AG04450 (cell line): ENCODE measurements at regions of chr4 and their contacts with region 1.

Region 1: DNA sequence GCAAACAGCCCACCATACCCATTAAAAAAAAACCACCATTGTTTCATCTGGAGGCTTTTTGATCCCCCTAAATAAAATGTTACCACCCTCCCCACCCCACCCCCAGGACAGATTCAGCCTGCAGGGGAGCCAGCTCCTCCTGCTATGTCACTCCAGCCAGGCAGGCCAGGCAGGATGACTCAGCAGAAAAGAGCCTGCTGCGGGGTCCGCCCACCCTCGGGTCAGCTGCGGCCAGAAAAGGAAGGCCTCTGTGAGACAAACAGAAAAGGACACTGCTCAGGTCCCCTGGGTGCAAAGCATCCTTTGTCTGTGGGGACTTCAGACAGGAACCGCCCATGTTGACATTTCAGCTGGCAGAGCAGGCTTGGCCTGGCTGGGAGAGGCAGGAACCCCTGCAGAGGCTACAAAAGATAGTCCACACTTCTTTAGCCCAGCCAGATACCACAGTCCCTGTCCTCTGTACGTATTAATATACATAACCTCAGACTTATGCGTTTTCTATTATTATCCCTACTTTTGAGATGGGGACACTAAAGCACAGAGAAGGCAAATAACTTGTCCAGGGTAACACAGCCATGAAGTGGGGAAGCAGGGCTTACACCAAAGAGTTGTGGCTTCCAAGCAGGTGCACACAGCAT is 147.7 kb downstream of the CPEB2 start:
- DNase-seq: peak; percentile 46
- H3K4me3 ChIP-seq: no peak overlapping the region
- H3K27ac ChIP-seq: peak overlapping the region; percentile 65
- H3K27me3 ChIP-seq: no peaks in the 10 kb centered on the region
- CTCF ChIP-seq: no peak; the same call in 1 of the 2 replicates

Region 2: DNA sequence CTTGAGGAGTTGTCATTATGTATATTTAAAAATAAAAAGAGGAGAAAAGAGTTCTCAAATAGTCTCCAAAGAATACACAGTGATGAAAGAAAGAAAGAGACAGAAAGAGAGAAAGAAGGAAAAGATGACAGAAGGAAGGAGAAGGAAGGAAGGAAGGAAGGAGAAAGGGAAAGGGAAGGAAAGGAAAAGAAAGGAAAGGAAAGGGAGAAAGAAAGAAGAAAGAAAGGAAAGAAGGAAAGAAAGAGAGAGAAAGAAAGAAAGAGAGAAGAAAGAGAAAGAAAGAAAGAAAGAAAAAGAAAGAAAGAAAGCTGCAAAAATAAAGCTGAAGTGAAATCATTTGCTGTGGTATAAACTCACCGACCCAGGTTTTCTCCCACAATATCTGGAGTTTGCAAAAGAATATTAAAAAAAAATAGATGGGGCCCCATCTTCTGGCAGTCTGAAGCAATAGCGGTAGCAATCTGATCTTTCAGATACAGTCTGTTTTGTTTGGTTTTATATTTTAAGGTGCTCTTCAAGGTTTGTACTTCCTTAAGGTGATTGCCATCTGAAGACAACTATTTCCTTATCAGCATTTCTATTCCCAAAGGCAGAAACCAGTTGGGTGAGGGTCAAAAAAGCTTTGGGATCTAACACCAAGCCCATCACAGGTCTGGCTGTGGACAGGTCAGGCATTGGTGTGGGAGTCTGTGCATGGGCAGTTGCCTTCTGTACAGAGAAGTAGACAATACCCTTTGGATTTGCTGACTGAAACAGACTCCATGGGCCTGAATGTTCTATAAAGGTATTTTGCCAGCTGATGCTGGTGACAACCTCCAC is 12.7 kb after region 1 on chr4:
- CTCF ChIA-PET with region 1: interaction called, 11 read pairs
- POLR2A ChIA-PET with region 1: no interaction called
- DNase-seq: no peak
- H3K4me3 ChIP-seq: no peak overlapping the region
- H3K27ac ChIP-seq: no peak overlapping the region
- H3K27me3 ChIP-seq: no peaks in the 10 kb centered on the region
- CTCF ChIP-seq: peak; percentile 66

Region 3: DNA sequence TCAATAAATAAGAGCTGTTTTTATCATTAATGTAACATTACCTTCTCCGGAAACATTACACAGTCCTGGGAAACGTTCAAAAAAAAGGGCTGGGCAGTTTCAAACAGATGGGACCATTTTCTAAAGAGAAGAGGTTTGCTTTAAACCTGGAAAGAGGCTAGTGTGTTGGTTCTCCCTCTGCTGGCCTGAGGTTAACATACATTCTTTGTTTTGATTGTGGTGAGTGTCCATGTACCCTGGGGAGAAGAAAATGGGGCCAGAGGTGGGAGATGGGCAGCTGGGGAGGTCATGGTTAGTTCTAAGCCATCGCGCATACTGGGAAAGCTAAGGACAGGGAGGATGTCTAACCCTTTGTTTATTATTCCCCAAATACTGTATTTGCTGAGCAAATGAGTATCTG is 47.0 kb after region 1 on chr4:
- CTCF ChIA-PET with region 1: no interaction called
- POLR2A ChIA-PET with region 1: no interaction called
- DNase-seq: no peak
- H3K4me3 ChIP-seq: no peak overlapping the region
- H3K27ac ChIP-seq: no peak overlapping the region
- H3K27me3 ChIP-seq: no peaks in the 10 kb centered on the region
- CTCF ChIP-seq: peak; percentile 51